HepG2 (cell line): ENCODE measurements at regions of chr1 and their contacts with region 1.

Region 1: DNA sequence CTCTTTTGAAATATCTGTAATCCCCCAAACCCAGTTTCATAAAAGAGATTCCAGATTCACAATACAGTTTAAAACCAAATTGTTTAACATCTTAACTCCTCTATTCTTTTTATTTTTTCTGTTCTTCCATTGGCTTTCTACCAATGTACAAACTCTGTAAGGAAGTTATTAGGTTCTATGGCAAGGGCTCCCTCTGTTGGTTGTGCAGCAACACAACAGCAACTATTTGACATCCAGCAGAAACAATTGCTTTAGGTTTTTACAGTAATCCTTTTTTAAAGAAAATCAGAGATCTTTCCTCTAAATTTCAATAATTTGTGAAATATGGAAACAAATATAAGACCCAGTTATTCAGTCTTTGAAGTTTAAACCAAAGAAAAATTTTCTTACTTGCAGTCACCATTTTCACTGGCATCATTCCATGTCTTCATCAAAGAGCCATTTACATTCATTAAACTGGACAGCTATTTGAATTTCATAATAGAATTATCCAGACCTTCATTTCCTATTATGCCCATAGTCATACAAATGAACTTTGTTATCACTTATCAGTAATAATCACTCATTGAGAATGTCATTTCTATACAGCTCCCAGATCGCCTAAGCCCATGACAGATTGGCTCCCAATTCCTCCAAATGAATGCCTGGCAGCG is 46.5 kb upstream of the RNF11 start:
- DNase-seq: peak; percentile 51
- ATAC-seq: peak; percentile 54
- H3K4me3 ChIP-seq: no peak overlapping the region
- H3K27ac ChIP-seq: no peak overlapping the region
- H3K4me1 ChIP-seq: no peaks in the 10 kb centered on the region
- H3K27me3 ChIP-seq: no peaks in the 10 kb centered on the region
- CTCF ChIP-seq: peak; percentile 72
- EP300 ChIP-seq: no peak
- POLR2A ChIP-seq: no peak
- RAD21 ChIP-seq: no peak

Region 2: DNA sequence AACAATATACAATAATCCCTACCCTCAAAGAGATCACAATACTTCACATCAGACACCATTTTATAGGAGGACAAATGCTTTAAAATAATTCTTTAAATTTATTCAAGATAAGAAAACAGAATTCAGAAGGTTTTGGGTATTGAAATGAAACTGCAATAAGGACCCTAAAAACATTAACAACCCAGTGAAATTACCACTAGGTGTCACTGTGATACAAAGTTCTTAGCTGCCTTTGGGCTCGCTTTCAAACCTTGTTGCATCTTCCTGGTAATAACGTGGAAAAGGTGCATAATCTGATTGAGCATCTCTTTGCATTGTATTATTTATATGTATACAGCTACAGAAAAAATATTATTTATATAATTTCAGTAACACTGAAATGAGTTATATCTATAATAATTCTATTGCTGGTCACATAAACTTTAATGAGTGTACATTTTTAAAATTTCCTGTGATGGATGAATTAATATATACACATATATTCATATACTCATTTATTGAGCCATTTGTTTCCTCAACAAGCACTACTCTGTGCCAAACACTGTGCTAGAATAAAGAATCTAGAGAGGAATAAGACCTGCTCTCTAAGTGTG is 414.7 kb before region 1 on chr1:
- CTCF ChIA-PET with region 1: interaction called, 5 read pairs
- POLR2A ChIA-PET with region 1: no interaction called
- in situ Hi-C with region 1: loop called (anchors 10 kb)
- intact Hi-C with region 1: loop called (anchors 1 kb)
- DNase-seq: peak; percentile 63
- ATAC-seq: peak; percentile 59; the same call in 1 of the 3 replicates
- H3K4me3 ChIP-seq: no peak overlapping the region
- H3K27ac ChIP-seq: no peak overlapping the region
- H3K4me1 ChIP-seq: peaks cover 14% of the 10 kb centered on the region
- H3K27me3 ChIP-seq: no peaks in the 10 kb centered on the region
- CTCF ChIP-seq: peak; percentile 76
- EP300 ChIP-seq: no peak
- POLR2A ChIP-seq: no peak
- RAD21 ChIP-seq: peak; percentile 56

Region 3: DNA sequence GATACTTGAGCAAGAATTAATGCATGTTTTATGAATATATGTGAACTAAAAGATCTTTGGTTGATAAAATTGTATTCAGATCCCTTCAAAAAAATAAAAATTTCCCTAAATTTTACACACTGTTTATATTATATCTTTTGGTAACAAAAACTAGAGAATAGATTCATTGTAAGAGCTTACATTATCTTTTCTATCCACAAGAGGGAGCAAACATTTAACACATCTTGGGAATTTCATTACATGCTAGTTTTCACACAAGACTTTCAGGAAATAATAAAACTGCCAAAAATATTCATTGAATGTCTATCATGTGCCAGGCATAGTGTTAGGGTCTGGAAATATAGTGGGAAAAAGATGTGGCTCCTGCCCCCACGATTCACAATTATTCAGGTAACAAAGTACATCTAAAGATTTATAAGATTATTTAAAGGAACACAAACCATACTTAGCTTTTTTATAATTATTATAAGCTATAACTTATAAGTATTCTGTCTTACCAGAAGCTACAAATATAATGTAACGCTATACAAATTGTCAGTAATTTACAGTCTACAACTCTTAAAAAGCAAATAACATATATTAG is 260.1 kb before region 1 on chr1:
- CTCF ChIA-PET with region 1: interaction called, 4 read pairs
- POLR2A ChIA-PET with region 1: no interaction called
- in situ Hi-C with region 1: no loop called
- intact Hi-C with region 1: loop called (anchors 1 kb)
- DNase-seq: peak; percentile 47
- ATAC-seq: no peak
- H3K4me3 ChIP-seq: no peak overlapping the region
- H3K27ac ChIP-seq: no peak overlapping the region
- H3K4me1 ChIP-seq: peaks cover 18% of the 10 kb centered on the region
- H3K27me3 ChIP-seq: no peaks in the 10 kb centered on the region
- CTCF ChIP-seq: peak; percentile 38
- EP300 ChIP-seq: no peak
- POLR2A ChIP-seq: no peak
- RAD21 ChIP-seq: no peak

Region 4: GRCh38 chr1:51088488-51088887 is 101.1 kb before region 1 on chr1:
- CTCF ChIA-PET with region 1: no interaction called
- POLR2A ChIA-PET with region 1: no interaction called
- in situ Hi-C with region 1: no loop called
- intact Hi-C with region 1: loop called (anchors 2 kb)
- DNase-seq: no peak
- ATAC-seq: no peak
- H3K4me3 ChIP-seq: no peak overlapping the region
- H3K27ac ChIP-seq: no peak overlapping the region
- H3K4me1 ChIP-seq: no peaks in the 10 kb centered on the region
- H3K27me3 ChIP-seq: no peaks in the 10 kb centered on the region
- CTCF ChIP-seq: 0 out of 2 replicates have a peak, but pooled peaks have one; percentile 10
- EP300 ChIP-seq: no peak
- POLR2A ChIP-seq: no peak
- RAD21 ChIP-seq: no peak

Region 5: GRCh38 chr1:51139474-51139873 is 50.1 kb before region 1 on chr1:
- CTCF ChIA-PET with region 1: no interaction called
- POLR2A ChIA-PET with region 1: no interaction called
- in situ Hi-C with region 1: no loop called
- intact Hi-C with region 1: no loop called
- DNase-seq: no peak
- ATAC-seq: no peak
- H3K4me3 ChIP-seq: no peak overlapping the region
- H3K27ac ChIP-seq: no peak overlapping the region
- H3K4me1 ChIP-seq: no peaks in the 10 kb centered on the region
- H3K27me3 ChIP-seq: no peaks in the 10 kb centered on the region
- CTCF ChIP-seq: no peak
- EP300 ChIP-seq: no peak
- POLR2A ChIP-seq: no peak
- RAD21 ChIP-seq: no peak

Region 6: DNA sequence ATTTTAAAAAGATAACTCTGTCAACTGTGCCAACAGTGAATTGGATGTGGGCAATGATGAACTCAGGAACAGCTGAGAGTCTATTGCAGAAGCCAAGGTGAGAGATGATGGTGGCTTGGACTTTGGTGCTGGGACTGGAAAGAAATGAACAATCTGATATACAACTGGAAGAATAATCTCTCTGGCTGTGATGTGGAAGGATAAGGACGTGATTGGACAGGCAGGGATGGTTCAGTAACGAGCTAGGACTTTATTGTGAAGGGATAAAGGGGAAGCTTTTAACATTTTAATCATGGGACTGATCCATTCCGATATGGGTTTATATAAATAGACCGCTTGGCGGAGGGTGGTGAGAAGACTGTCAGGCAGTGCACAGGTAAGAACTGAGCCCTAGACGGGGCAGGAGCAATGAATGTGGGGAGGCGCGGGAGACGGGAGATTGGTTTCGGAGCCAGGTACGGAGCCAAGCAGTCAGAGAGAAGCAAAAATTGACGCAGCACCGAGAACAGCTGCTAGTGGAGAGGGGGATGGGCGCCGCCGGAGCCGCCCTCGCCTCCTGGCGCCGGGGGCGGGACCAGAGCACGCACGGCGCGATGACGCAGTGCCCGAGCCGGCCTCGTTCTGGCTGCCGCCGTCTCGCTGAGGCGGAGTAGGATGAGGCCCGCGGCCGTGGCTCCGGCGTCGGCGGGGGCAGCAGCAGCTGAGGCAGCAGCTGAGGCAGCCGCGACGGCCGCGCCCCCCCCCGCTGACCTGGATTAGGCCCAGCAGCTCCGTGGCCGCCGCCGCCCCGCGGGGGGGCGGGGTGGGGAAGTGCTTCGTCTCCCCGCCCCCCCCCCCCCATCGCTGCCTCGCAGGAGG is 46.4 kb after region 1 on chr1 and contains the start of gene RNF11:
- CTCF ChIA-PET with region 1: no interaction called
- POLR2A ChIA-PET with region 1: no interaction called
- in situ Hi-C with region 1: no loop called
- intact Hi-C with region 1: loop called (anchors 2 kb)
- DNase-seq: peak; percentile 68
- ATAC-seq: peak; percentile 96
- H3K4me3 ChIP-seq: peak within 1 kb of the TSS; percentile 93 to 100 (median 99)
- H3K27ac ChIP-seq: peak within 1 kb of the TSS; percentile 76
- H3K4me1 ChIP-seq: peaks cover 52% of the 10 kb centered on the region
- H3K27me3 ChIP-seq: peaks cover 1 to 3% of the 10 kb centered on the region in 2 experiments; a peak in 1 of 5 replicates
- CTCF ChIP-seq: no peak
- EP300 ChIP-seq: no peak; a peak in 1 of 4 replicates
- POLR2A ChIP-seq: peak; percentile 81 to 94
- RAD21 ChIP-seq: peak; percentile 42; the same call in 1 of the 2 replicates
- total RNA-seq, gene RNF11: 41.2 and 49.0 TPM in 2 replicates

Region 7: DNA sequence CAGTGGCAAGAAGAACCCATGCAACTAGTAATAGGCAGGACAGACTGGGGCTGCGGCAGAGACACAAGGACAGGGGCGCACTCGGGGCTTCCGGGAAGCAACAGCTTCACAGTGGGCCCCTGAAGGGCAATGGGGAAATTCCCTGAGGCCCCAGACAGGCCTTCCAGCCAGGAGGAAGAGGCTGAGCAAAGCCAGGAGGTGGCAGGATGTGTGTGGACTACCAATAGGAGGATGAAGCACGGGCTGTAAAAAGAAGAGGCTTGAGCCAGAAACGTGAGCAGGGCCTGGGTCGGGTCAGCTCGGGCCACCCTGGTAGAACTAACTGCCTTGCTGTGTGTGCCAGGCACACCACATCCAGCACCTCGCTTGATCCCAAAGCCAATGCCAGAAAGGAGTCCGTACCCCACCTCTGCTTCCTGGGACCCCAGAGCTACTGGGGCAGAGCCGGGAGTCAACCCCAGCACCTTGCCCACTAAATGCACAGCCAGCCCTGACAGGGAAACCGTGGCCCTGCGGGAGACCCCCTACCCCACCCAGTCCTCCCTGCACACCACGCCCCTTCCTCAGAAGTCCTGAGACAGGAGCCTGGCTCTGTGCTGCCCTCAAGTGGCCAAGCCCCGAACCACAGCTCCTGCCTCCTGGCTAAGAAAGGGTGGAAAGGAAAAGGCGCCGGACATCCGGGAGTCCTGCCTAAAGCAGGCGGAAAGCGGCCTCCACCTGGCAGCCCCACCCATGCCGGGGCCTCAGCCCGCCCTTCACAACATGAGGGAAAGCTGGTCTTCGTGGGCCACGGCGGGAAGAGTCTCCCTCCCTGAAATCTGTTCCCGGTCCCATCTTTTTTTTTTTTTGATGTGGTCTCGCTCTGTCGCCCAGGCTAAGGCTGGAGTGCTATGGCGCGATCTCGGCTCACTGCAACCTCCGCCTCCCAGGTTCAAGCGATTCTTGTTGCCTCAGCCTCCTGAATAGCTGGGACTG is 107.1 kb after region 1 on chr1:
- CTCF ChIA-PET with region 1: interaction called, 5 read pairs
- POLR2A ChIA-PET with region 1: no interaction called
- in situ Hi-C with region 1: no loop called
- intact Hi-C with region 1: loop called (anchors 2 kb)
- DNase-seq: peak; percentile 54
- ATAC-seq: peak; percentile 81
- H3K4me3 ChIP-seq: peak overlapping the region; percentile 8 to 63 (median 37); a peak in 5 of 6 replicates
- H3K27ac ChIP-seq: no peak overlapping the region
- H3K4me1 ChIP-seq: peaks cover 19% of the 10 kb centered on the region
- H3K27me3 ChIP-seq: no peaks in the 10 kb centered on the region; a peak in 2 of 5 replicates
- CTCF ChIP-seq: peak; percentile 94
- EP300 ChIP-seq: no peak
- POLR2A ChIP-seq: no peak
- RAD21 ChIP-seq: peak; percentile 81